SK-N-SH (cell line): ENCODE measurements at regions of chr18 and their contacts with region 1.

Region 1: DNA sequence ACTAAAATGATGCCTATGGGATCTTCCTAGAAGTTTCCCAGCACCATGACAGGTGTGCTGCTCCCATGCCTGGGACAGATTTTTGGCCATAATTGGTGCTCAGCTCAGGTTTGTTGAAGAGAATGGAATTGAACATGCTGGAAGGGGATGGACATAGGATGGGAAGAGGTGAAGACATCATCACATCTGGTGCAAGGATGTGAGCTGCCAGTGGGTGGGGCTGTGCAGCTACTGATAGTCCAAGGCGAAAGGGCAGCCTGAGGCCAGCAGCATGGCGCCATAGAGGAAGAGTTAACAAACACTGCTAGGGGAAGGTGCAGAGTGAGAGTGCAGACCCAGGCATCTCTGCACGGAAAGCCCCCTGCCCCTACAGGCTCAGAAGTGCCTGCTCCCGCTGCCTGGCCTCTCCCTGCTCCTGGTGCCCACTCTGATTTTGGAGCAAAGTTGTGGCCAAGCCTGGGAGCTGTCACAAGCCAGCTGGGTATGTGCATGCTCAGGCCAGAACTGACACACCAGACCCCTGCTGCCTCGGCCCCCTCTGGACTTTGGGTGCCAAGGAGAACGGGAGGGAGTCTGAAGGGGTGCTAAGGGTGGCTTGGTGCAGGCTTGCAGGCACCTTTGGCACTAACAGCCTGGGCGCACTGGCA is 178.6 kb downstream of the ZBTB7C start:
- DNase-seq: peak; percentile 79
- H3K4me3 ChIP-seq: peak overlapping the region in 1 of 2 experiments; percentile 50; a peak in 1 of 4 replicates
- H3K27ac ChIP-seq: peak overlapping the region in 1 of 2 experiments; percentile 83; a peak in 2 of 4 replicates
- H3K4me1 ChIP-seq: peaks cover 0 to 44% of the 10 kb centered on the region in 2 experiments; a peak in 2 of 4 replicates
- H3K27me3 ChIP-seq: no peaks in the 10 kb centered on the region; the same call in 1 of the 2 replicates
- CTCF ChIP-seq: peak; percentile 69
- EP300 ChIP-seq: no peak
- RAD21 ChIP-seq: peak; percentile 95

Region 2: DNA sequence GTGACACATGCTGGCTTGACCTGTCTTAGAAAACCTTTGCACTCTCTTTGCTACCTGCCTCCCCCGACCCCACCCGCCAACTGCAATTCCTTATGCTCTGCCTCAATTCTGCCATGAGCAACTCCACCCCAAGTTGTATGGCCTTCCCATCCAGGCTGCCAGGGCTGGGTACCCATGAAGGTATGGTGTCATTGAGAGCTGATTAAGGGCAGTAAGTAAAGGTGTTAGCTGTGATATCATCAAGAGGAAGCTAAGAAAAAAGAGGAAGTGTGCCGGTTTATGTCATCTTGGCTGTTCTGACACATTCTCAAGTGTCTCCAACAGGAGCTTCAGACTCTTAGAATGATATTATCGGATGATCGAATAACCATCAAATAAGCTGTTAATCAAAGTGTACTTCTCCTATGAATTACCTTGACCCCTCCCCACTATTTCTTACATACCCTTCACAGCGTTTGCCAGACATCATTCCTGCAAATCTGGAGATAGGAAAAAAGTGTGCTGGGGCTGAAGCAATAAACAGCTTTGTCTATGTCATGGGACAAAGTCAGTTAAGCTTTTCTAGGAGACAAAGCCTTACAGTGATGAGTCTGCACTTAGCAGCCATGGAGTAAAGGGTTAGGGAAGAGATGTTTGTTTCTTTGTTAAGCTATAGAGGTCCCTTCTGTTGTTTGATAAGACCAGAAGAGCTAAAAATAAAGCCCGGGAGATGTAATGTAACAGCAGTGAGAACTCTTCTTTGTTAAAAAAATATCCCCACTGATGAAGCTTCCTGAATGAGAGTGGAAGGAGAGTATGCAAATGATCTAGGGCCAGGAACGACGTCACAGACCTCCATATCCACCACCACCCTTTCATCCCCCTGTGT is 259.7 kb before region 1 on chr18:
- CTCF ChIA-PET with region 1: no interaction called
- POLR2A ChIA-PET with region 1: no interaction called
- DNase-seq: no peak
- H3K4me3 ChIP-seq: no peak overlapping the region
- H3K27ac ChIP-seq: no peak overlapping the region
- H3K4me1 ChIP-seq: peaks cover 0 to 4% of the 10 kb centered on the region in 2 experiments; a peak in 1 of 4 replicates
- H3K27me3 ChIP-seq: no peaks in the 10 kb centered on the region; the same call in 1 of the 2 replicates
- CTCF ChIP-seq: no peak
- EP300 ChIP-seq: no peak
- RAD21 ChIP-seq: no peak

Region 3: GRCh38 chr18:48030616-48031480 is 199.7 kb before region 1 on chr18:
- CTCF ChIA-PET with region 1: interaction called, 62 read pairs
- POLR2A ChIA-PET with region 1: interaction called, 5 read pairs
- DNase-seq: peak; percentile 84
- H3K4me3 ChIP-seq: peak overlapping the region in 1 of 2 experiments; percentile 27; a peak in 1 of 4 replicates
- H3K27ac ChIP-seq: peak overlapping the region in 1 of 2 experiments; percentile 89; a peak in 2 of 4 replicates
- H3K4me1 ChIP-seq: peaks cover 0 to 56% of the 10 kb centered on the region in 2 experiments; a peak in 1 of 4 replicates
- H3K27me3 ChIP-seq: no peaks in the 10 kb centered on the region
- CTCF ChIP-seq: peak; percentile 79
- EP300 ChIP-seq: peak in 1 of 2 experiments; percentile 43; a peak in 1 of 4 replicates
- RAD21 ChIP-seq: peak; percentile 97

Region 4: GRCh38 chr18:48059455-48060010 is 171.1 kb before region 1 on chr18:
- CTCF ChIA-PET with region 1: interaction called, 16 read pairs
- POLR2A ChIA-PET with region 1: interaction called, 3 read pairs
- DNase-seq: peak; percentile 65
- H3K4me3 ChIP-seq: no peak overlapping the region
- H3K27ac ChIP-seq: peak overlapping the region in 1 of 2 experiments; percentile 74; a peak in 2 of 4 replicates
- H3K4me1 ChIP-seq: peaks cover 0 to 25% of the 10 kb centered on the region in 2 experiments; a peak in 1 of 4 replicates
- H3K27me3 ChIP-seq: no peaks in the 10 kb centered on the region
- CTCF ChIP-seq: no peak
- EP300 ChIP-seq: no peak
- RAD21 ChIP-seq: no peak; the same call in 1 of the 2 replicates

Region 5: GRCh38 chr18:48161191-48161910 is 69.2 kb before region 1 on chr18:
- CTCF ChIA-PET with region 1: interaction called, 12 read pairs
- POLR2A ChIA-PET with region 1: interaction called, 3 read pairs
- DNase-seq: peak; percentile 97
- H3K4me3 ChIP-seq: peak overlapping the region; percentile 64 to 71
- H3K27ac ChIP-seq: peak overlapping the region in 1 of 2 experiments; percentile 92; a peak in 2 of 4 replicates
- H3K4me1 ChIP-seq: peaks cover 0 to 73% of the 10 kb centered on the region in 2 experiments; a peak in 2 of 4 replicates
- H3K27me3 ChIP-seq: peaks cover 10% of the 10 kb centered on the region; the same call in 1 of the 2 replicates
- CTCF ChIP-seq: no peak
- EP300 ChIP-seq: no peak
- RAD21 ChIP-seq: no peak

Region 6: GRCh38 chr18:48295585-48296311 is 65.2 kb after region 1 on chr18:
- CTCF ChIA-PET with region 1: interaction called, 17 read pairs
- POLR2A ChIA-PET with region 1: no interaction called
- DNase-seq: peak; percentile 47
- H3K4me3 ChIP-seq: no peak overlapping the region
- H3K27ac ChIP-seq: no peak overlapping the region; a peak in 1 of 4 replicates
- H3K4me1 ChIP-seq: peaks cover 0 to 33% of the 10 kb centered on the region in 2 experiments; a peak in 2 of 4 replicates
- H3K27me3 ChIP-seq: no peaks in the 10 kb centered on the region
- CTCF ChIP-seq: peak; percentile 40
- EP300 ChIP-seq: no peak
- RAD21 ChIP-seq: peak; percentile 61

Region 7: DNA sequence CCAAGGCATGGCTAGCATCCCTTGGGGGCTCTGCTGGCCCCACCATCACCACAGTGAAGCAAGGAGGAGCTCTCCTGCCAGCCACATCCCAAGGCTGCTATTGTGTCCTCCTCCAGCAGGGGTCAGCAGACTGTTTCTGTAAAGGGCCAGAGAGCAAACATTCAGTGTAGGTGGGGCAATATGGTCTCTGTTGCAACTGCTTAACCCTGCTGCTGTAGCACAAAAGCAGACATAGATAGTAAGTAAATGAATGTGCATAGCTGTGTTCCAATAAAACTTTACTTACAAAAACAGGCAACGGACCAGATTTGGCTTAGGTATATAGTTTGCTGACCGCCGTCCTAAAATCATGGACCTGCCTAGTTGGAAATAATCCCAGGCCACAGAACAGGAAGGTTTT is 214.9 kb after region 1 on chr18:
- CTCF ChIA-PET with region 1: interaction called, 170 read pairs
- POLR2A ChIA-PET with region 1: interaction called, 3 read pairs
- DNase-seq: peak; percentile 66
- H3K4me3 ChIP-seq: peak overlapping the region in 1 of 2 experiments; percentile 21; a peak in 1 of 4 replicates
- H3K27ac ChIP-seq: peak overlapping the region in 1 of 2 experiments; percentile 22; a peak in 1 of 4 replicates
- H3K4me1 ChIP-seq: peaks cover 0 to 21% of the 10 kb centered on the region in 2 experiments; a peak in 1 of 4 replicates
- H3K27me3 ChIP-seq: peaks cover 56% of the 10 kb centered on the region; the same call in 1 of the 2 replicates
- CTCF ChIP-seq: peak; percentile 88
- EP300 ChIP-seq: no peak
- RAD21 ChIP-seq: peak; percentile 68

Region 8: DNA sequence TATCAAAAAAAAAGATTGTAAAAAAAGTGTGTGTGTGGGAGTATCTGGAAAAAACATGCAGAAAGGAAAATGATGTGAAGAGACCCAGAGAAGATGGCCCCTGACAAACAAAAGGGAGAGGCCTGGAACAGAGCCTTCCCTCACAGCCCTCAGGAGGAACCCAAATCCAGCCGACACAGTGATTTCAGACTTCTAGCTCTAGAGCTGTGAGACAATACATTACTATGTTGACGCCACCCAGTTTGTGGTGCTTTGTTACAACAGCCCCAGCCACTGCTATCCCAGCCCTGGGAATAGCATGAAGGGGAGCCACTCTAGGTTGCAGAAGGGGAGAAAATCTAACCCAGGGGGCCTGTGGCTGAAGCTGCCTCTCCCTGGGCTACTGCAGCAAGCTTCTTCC is 237.6 kb after region 1 on chr18:
- CTCF ChIA-PET with region 1: interaction called, 11 read pairs
- POLR2A ChIA-PET with region 1: no interaction called
- DNase-seq: no peak
- H3K4me3 ChIP-seq: no peak overlapping the region
- H3K27ac ChIP-seq: no peak overlapping the region
- H3K4me1 ChIP-seq: peaks cover 0 to 3% of the 10 kb centered on the region in 2 experiments; a peak in 2 of 4 replicates
- H3K27me3 ChIP-seq: no peaks in the 10 kb centered on the region
- CTCF ChIP-seq: no peak
- EP300 ChIP-seq: no peak
- RAD21 ChIP-seq: no peak